ENCODE measurements at regions of chr5 and their contacts with region 1.

Region 1: DNA sequence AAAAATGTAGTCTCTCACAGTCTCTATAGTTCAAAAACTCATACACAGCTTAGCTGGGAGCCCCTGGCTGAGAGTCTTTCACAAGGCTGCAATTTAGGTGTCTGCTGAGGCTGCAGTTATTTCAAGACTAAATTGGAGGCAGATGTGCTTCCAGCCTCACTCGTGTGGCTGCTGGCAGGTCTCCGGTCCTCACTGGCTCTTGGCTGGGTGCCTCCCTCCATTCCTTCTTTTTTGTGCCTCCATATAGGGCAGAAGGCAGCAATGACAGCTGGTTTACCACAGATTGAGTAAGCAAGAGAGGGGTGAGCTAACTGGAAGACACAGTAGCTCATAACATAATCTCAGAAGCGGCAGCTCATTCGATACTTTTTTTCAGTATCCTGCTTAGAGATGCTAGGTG is 2167.7 kb upstream of the WWC1 start:
- DNase-seq: no peak
- H3K4me3 ChIP-seq: no peak overlapping the region
- CTCF ChIP-seq: no peak

Region 2: DNA sequence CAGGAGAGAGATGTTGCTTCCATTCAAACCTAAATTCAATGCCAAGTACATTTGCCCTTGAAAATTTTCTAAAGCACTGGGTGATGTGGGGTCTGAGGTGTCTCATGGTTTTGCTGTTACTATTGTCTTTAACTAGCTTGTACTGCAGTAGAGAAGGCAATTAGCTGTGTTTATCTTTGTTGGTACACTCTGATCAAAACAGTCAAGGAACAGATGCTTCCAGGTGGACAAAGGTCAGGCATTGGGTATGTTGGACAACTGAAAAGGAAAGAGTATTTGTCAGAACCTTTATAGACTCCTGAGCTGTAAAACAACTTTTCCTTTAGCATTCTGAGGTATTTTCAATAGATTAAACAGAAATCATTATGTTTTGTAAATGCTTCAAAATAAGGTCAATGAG is 61.0 kb before region 1 on chr5:
- in situ Hi-C with region 1: loop called (anchors 5 kb)
- DNase-seq: no peak
- H3K4me3 ChIP-seq: no peak overlapping the region
- CTCF ChIP-seq: no peak

Region 3: DNA sequence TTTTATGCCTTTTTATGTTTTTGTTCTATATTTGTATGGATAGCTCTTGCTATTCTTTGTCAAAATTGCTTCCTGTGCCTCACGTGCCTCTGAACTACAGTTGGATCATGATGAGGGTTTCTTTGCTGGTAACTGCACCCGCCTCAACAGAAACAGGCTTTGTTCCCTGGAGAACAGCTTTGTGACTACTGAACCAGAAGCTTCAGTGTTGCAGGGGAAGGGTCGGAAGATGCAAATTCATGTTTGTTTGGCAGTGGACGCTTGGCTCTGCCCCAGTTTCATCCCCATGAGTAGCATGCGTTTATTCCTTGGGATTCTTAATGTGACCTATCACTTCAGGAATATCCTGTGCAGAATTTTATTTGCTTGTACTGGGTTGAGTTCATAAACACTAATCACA is 1208.6 kb after region 1 on chr5:
- in situ Hi-C with region 1: no loop called
- DNase-seq: no peak
- H3K4me3 ChIP-seq: no peak overlapping the region
- CTCF ChIP-seq: no peak